ENCODE measurements at regions of chr3 and their contacts with region 1.

Region 1: DNA sequence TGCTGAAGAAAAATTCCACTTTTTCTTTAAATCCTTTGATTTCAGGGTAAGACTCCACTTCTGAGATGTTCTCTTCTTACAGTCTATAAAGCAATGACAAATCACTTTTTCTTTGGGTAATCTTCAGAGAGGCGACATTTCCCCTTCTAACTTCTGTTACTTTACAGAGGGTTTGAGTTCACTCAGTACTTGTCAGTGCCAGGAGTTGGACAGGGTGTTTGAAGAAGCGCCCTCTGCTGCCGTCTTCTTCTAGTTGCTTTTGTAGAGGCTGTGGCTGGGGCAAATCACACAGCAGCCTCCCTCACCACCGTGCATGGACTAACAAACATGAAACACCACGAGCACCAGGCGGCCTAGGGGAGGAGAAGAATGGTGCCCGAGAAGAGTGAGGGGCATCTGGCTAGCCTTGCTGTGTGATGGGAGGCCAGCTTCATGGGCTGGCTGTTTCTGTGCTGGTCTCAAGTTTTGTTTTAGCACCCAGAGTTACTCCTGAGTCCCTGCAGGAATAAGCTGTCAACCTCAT is at the start of gene CD80:
- DNase-seq: peak; percentile 90
- ATAC-seq: peak; percentile 85
- H3K4me3 Mint-ChIP-seq: peak within 1 kb of the TSS; percentile 81
- H3K27ac Mint-ChIP-seq: peak within 1 kb of the TSS; percentile 80
- H3K4me1 Mint-ChIP-seq: peaks cover 69% of the 10 kb centered on the region
- H3K27me3 Mint-ChIP-seq: no peaks in the 10 kb centered on the region
- total RNA-seq, gene CD80: 22.5 to 47.0 TPM

Region 2: GRCh38 chr3:119125742-119126503 is 433.6 kb before region 1 on chr3:
- CTCF ChIA-PET with region 1: no interaction called
- DNase-seq: no peak
- ATAC-seq: no peak
- H3K4me3 Mint-ChIP-seq: no peak overlapping the region
- H3K27ac Mint-ChIP-seq: no peak overlapping the region
- H3K4me1 Mint-ChIP-seq: no peaks in the 10 kb centered on the region
- H3K27me3 Mint-ChIP-seq: peaks cover 14% of the 10 kb centered on the region

Region 3: GRCh38 chr3:119463171-119464169 is 96.0 kb before region 1 on chr3 and contains the start of gene TMEM39A:
- CTCF ChIA-PET with region 1: interaction called, 12 read pairs
- DNase-seq: peak; percentile 99
- ATAC-seq: peak; percentile 90
- H3K4me3 Mint-ChIP-seq: peak within 1 kb of the TSS; percentile 89
- H3K27ac Mint-ChIP-seq: peak within 1 kb of the TSS; percentile 98
- H3K4me1 Mint-ChIP-seq: peaks cover 53% of the 10 kb centered on the region
- H3K27me3 Mint-ChIP-seq: peaks cover 2% of the 10 kb centered on the region
- total RNA-seq, gene TMEM39A: 35.2 to 42.6 TPM

Region 4: DNA sequence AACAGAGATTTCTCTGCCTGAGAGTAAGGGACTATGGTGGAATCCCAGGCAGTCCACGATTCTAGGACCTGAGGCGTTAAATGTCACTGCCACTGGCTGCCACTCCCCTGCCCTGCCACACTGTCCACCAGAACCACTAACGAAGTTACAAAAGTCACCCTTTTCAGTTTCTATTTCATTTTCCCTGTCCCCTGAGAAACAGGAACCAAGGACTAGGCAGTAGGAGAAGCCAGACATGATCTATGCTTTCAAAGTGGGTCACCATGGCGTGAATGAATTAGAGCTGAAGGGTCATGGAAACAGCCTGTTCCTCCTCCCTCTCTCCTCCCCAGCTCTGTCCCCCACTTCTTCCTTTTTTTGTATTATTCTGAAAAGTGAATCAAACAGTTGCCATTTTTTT is 10.7 kb after region 1 on chr3:
- CTCF ChIA-PET with region 1: interaction called, 10 read pairs
- DNase-seq: no peak
- ATAC-seq: peak; percentile 58
- H3K4me3 Mint-ChIP-seq: no peak overlapping the region
- H3K27ac Mint-ChIP-seq: peak overlapping the region; percentile 49
- H3K4me1 Mint-ChIP-seq: peaks cover 21% of the 10 kb centered on the region
- H3K27me3 Mint-ChIP-seq: peaks cover 6% of the 10 kb centered on the region

Region 5: GRCh38 chr3:119579366-119580165 is 20.1 kb after region 1 on chr3 and contains the start of gene ADPRH:
- CTCF ChIA-PET with region 1: interaction called, 14 read pairs
- DNase-seq: peak; percentile 71
- ATAC-seq: peak; percentile 88
- H3K4me3 Mint-ChIP-seq: peak within 1 kb of the TSS; percentile 83
- H3K27ac Mint-ChIP-seq: peak within 1 kb of the TSS; percentile 87
- H3K4me1 Mint-ChIP-seq: peaks cover 24% of the 10 kb centered on the region
- H3K27me3 Mint-ChIP-seq: no peaks in the 10 kb centered on the region
- total RNA-seq, gene ADPRH: 6.1 to 19.3 TPM

Measured in activated CD8-positive, alpha-beta memory T cell treated with anti-CD3 and anti-CD28 coated beads, Interleukin-2, amount 10 ng/mL, durations not matched to agents 7 days and 5 days (primary cell).